Activated CD4-positive, alpha-beta memory T cell treated with anti-CD3 and anti-CD28 coated beads for 36 hours (primary cell): ENCODE measurements at regions of chr14 and their contacts with region 1.

Region 1: DNA sequence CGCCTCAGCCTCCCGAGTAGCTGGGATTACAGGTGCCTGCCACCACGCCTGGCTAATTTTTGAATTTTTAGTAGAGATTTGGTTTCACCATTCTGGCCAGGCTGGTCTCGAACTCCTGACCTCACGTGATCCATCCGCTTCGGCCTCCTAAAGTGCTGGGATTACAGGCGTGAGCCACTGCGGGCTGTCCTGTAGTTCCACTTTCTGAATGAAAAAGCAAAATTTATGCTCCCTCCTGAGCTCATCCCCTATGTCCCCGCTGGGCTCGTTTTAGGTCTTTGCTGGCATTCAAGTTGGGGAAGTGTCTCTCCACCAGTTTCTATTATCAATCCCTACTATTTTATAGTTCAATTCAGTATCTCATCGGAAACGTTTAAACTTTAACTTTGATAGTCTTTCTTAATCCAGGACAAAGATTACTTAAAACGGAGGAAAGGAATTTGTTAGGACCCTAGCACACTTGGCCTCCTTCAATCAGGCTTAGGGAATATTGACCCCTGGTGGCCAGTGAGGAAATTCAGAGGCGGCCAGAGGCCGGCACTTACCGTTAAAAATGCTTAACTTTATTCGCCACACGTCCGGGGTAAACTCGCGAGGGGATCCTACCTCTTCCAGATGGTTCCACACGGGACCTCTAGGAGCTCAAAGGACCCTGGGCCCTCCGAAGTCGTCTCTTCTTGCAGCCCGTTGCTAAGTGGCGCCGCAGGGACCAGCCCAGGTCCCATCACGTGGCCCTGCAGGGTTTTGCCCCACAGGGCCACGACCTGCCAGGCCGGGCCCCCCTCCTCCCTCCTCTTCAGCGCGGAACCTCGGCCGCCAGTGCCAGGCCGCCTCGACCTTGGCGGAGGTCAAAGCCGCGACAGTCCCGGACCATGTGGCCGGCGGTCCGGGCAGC is 11.4 kb upstream of the DNAL1 start:
- DNase-seq: peak; percentile 73
- H3K4me3 Mint-ChIP-seq: peak overlapping the region; percentile 55
- H3K27ac Mint-ChIP-seq: peak overlapping the region; percentile 34
- H3K4me1 Mint-ChIP-seq: peaks cover 7% of the 10 kb centered on the region
- H3K27me3 Mint-ChIP-seq: peaks cover 3% of the 10 kb centered on the region

Region 2: DNA sequence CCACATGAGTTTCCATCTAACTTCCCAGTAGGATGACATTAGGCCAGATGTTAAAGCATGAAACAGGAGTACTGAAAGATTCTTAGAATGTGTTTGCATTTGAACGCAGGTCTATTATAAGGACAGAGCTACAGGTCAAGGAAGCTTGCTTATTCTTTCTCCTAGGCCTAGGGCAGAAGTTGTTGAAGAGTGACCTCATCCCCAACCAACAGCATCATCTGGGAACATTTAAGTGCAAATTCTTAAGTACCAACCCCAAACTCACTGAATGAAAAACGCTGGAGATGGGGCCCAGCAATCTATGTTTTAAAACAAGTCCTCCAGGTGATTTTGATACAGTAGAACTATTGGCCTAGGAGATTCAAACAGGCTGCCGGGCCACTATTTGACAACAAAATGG is 343.6 kb before region 1 on chr14:
- CTCF ChIA-PET with region 1: no interaction called
- POLR2A ChIA-PET with region 1: no interaction called
- intact Hi-C with region 1: no loop called
- DNase-seq: no peak
- H3K4me3 Mint-ChIP-seq: no peak overlapping the region
- H3K27ac Mint-ChIP-seq: no peak overlapping the region
- H3K4me1 Mint-ChIP-seq: peaks cover 27% of the 10 kb centered on the region
- H3K27me3 Mint-ChIP-seq: no peaks in the 10 kb centered on the region

Region 3: GRCh38 chr14:73491256-73492042 is 141.9 kb before region 1 on chr14:
- CTCF ChIA-PET with region 1: interaction called, 3 read pairs
- POLR2A ChIA-PET with region 1: no interaction called
- intact Hi-C with region 1: loop called (anchors 5 kb)
- DNase-seq: peak; percentile 85
- H3K4me3 Mint-ChIP-seq: peak overlapping the region; percentile 77
- H3K27ac Mint-ChIP-seq: peak overlapping the region; percentile 74
- H3K4me1 Mint-ChIP-seq: peaks cover 43% of the 10 kb centered on the region
- H3K27me3 Mint-ChIP-seq: no peaks in the 10 kb centered on the region

Region 4: DNA sequence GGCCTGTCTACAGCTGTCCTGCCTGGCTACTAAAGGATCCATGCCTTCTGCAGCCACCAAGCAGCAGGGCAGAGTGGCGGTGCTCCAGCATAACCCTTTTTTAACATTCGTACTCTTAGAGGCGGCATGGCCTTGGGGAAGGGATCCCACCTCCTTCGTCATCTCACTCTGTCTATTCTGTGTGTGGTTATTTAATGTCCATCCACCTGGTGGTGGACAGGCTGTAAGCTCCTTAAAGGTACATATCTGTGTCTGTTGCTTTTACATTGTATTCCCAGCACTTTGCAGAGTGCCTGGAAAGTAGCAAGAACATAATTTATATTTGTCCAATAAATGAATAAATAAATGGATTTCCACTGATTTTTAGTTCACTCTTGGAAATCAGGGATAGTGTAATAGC is 112.1 kb before region 1 on chr14:
- CTCF ChIA-PET with region 1: interaction called, 10 read pairs
- POLR2A ChIA-PET with region 1: no interaction called
- intact Hi-C with region 1: no loop called
- DNase-seq: no peak
- H3K4me3 Mint-ChIP-seq: no peak overlapping the region
- H3K27ac Mint-ChIP-seq: no peak overlapping the region
- H3K4me1 Mint-ChIP-seq: no peaks in the 10 kb centered on the region
- H3K27me3 Mint-ChIP-seq: no peaks in the 10 kb centered on the region

Region 5: DNA sequence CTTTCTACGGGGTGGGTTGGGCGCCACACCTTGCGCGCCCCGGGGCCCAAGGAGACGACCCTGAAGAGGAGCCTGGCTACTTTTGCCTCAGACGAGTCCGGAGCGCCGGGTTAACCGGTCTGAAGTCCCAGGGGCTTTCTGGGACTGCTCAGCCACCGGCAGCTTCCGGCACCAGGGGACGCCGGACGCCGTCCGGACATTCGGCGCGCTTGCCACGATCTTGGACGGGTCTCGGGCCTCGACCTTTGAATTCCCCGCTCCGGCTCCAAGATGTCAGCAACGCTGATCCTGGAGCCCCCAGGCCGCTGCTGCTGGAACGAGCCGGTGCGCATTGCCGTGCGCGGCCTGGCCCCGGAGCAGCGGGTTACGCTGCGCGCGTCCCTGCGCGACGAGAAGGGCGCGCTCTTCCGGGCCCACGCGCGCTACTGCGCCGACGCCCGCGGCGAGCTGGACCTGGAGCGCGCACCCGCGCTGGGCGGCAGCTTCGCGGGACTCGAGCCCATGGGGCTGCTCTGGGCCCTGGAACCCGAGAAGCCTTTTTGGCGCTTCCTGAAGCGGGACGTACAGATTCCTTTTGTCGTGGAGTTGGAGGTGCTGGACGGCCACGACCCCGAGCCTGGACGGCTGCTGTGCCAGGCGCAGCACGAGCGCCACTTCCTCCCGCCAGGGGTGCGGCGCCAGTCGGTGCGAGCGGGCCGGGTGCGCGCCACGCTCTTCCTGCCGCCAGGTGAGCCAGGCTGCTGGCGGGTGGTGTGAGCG is 41.5 kb before region 1 on chr14 and contains the start of gene ACOT4:
- CTCF ChIA-PET with region 1: no interaction called
- POLR2A ChIA-PET with region 1: no interaction called
- intact Hi-C with region 1: loop called (anchors 5 kb)
- DNase-seq: peak; percentile 62
- H3K4me3 Mint-ChIP-seq: peak within 1 kb of the TSS; percentile 75
- H3K27ac Mint-ChIP-seq: peak within 1 kb of the TSS; percentile 42
- H3K4me1 Mint-ChIP-seq: peaks cover 15% of the 10 kb centered on the region
- H3K27me3 Mint-ChIP-seq: no peaks in the 10 kb centered on the region
- total RNA-seq, gene ACOT4: 3.2 to 3.3 TPM

Region 6: DNA sequence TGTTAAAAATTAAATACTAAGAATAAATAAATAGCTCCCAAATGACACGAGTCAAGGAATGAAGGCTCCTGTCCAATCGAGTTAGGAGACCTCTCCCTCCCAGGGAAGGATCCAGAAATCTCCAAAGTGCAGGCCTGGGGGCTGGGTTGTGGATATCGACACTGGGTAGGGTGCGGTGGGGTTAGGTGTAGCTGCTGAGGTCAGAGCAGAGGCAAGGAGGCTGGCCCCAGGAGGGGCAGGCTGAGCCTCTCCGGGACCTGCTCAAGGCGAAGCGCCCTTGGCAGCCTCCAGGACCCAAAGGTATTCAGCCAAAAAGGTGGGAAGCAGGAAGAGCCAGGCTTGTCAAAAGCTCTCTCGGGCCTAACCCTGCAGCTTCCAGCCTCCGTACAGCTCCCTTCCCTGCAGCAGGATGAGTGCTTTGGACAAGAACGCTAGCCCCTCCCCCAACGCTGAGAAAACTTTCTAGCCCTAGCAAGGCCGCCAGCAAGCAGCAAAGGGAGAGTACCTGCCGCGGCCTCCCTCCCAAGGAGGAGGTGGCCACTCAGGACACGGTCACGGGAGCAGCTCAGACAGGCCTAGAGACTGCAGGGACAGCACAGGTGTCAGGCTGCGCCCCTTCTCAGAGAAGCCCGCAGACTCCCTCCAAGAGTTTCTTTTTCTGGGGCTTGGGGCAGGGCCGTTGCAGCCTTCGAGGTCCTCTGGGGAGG is 84.5 kb after region 1 on chr14:
- CTCF ChIA-PET with region 1: no interaction called
- POLR2A ChIA-PET with region 1: no interaction called
- intact Hi-C with region 1: no loop called
- DNase-seq: no peak
- H3K4me3 Mint-ChIP-seq: no peak overlapping the region
- H3K27ac Mint-ChIP-seq: peak overlapping the region; percentile 14
- H3K4me1 Mint-ChIP-seq: peaks cover 13% of the 10 kb centered on the region
- H3K27me3 Mint-ChIP-seq: no peaks in the 10 kb centered on the region